Sciatic nerve (tissue), 2 donors: ENCODE measurements at regions of chr7 and their contacts with region 1.

Region 1: DNA sequence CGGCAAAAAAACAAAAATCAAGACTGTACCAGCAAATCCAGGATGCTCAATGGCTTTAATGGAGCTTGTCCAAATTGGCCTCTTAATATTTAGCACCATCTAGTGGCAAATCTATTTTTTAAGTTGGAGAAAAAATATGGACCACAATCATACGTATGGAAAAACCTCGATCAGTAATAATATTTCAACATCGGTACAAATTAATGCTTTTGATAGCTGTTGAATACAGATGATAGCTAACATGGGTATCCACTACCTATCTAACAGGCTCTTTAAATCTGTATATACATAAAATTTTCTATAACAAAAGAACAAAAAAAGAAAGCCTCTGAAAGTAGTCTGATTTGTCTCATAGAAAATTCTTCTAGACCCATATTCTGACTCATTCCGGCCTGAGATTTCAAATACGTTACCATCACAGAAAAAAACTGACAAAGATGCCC is 29.2 kb downstream of the COA1 start:
- DNase-seq: no peak
- ATAC-seq: peak; percentile 67

Region 2: DNA sequence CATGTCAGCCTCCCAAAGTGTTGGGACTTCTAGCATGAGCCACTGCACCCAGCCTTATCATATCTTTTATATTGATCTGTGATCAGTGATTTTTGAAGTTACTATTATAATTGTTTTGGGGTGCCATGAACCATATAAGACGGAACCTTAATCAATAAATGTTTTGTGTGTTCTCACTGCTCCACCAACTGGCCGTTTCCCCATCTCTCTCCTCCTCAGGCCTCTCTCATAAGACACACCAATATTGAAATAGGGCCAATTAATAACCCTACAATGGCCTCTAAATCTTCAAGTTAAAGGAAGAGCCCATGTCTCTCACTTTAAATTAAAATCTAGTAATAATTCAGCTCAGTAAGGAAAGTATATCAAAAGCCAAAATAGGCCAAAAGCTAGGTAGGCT is 1163.0 kb before region 1 on chr7:
- intact Hi-C with region 1: no loop called
- DNase-seq: no peak
- ATAC-seq: no peak

Region 3: DNA sequence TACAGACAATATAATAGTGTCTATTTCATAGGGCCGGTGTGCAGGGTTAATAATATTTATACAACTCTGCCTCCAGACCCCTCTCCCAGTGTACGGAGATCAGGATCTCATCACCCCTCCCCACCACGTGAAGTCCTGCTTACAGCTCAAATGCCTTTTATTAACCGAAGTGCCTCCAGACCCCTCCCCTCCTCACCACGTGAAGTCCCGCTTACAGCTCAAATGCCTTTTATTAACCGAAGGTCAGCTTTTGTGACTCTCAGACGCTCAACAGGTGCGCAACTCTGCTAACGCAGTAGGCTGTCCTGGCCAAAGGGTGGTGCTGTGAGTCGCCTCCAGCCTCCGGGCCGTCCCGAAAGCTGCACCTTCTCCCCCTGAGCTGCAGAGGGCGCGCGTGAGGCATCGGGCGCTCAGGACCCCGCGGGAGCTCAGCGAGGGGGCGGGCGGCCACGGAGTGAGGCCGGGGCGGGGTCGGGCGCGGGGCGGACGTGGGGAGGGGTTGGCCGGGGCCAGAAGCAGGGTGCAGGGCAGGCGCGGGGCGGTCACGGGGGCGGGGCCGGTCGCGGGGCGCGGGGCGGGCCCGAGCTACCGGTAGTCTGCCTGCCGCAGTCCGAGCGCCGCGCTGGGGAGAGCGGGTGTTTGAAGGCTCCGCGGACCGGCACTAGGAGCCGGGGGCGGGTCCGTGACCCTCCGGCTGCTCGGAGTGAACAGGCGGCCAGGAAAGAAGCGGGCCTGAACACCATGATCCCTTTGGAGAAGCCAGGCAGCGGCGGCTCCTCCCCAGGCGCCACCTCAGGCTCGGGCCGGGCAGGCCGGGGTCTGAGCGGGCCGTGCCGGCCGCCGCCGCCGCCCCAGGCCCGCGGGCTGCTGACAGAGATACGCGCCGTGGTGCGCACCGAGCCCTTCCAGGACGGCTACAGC is 117.3 kb before region 1 on chr7 and contains the start of gene STK17A:
- intact Hi-C with region 1: loop called (anchors 5 kb)
- DNase-seq: peak; percentile 94
- ATAC-seq: peak; percentile 97
- total RNA-seq, gene STK17A: 19.3 TPM

Region 4: DNA sequence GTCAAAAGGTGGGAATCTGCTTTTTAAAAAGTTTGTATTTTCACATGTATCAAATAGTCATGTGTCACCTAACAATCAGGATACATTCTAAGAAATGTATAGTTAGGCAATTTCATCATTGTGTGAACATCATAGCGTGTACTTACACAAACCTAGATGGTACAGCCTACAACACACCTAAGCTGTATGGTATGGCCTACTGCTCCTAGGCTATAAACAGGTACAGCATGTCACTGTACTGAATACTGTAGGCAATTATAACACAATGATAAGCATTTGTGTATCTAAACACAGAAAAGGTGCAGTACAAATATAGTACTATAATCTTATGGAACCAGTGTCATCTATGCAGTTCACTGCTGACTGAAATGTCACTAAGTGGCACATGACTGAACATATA is 11.4 kb after region 1 on chr7:
- intact Hi-C with region 1: no loop called
- DNase-seq: no peak
- ATAC-seq: no peak